ENCODE measurements at regions of chr17 and their contacts with region 1.

Region 1: DNA sequence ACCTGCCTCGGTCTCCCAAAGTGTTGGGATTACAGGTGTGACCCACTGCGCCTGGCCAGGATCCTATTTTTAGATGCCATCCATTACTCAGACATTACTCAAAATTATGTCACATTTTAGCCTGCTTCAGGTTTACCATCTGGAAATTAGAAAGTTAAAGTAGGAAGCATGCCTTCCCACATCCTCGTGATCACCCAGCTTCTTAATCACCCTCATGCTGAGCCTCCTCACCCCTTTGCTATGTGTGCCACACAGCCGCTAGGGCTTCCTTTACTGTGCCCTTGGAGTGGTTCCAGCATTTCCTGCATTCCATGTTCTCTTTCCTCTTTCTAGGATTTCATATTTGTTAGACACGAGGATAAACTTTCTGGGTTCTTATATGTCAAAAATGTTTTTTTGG is 9.3 kb downstream of the ADORA2B start:
- DNase-seq: no peak
- H3K4me3 Mint-ChIP-seq: no peak overlapping the region
- H3K27ac Mint-ChIP-seq: no peak overlapping the region
- H3K4me1 Mint-ChIP-seq: peaks cover 34% of the 10 kb centered on the region
- H3K27me3 Mint-ChIP-seq: peaks cover 64% of the 10 kb centered on the region

Region 2: DNA sequence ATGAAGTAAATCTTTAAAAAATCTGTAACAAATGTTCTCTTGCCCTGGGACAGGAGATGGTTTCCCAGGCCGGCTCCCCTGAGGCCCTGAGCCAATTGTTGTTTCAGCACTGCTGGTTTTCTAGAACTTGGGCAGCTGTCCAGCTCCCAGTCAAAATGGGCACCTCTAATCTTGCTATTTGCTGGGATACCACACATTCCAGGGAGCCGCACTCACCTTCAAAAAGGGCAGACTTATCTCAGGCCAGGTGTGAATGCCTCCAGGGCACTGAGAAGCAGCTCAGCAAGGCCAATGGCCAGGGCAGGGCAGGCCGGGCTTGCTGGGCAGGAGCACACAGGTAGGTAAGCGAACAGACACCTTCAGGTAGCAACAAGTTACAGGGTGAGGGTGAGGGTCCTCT is 294.6 kb before region 1 on chr17:
- intact Hi-C with region 1: no loop called
- DNase-seq: no peak
- H3K4me3 Mint-ChIP-seq: no peak overlapping the region
- H3K27ac Mint-ChIP-seq: no peak overlapping the region
- H3K4me1 Mint-ChIP-seq: peaks cover 16% of the 10 kb centered on the region
- H3K27me3 Mint-ChIP-seq: no peaks in the 10 kb centered on the region

Region 3: GRCh38 chr17:15886804-15887203 is 67.4 kb before region 1 on chr17:
- intact Hi-C with region 1: loop called (anchors 5 kb)
- DNase-seq: no peak
- H3K4me3 Mint-ChIP-seq: no peak overlapping the region
- H3K27ac Mint-ChIP-seq: no peak overlapping the region
- H3K4me1 Mint-ChIP-seq: peaks cover 18% of the 10 kb centered on the region
- H3K27me3 Mint-ChIP-seq: peaks cover 5% of the 10 kb centered on the region

Region 4: DNA sequence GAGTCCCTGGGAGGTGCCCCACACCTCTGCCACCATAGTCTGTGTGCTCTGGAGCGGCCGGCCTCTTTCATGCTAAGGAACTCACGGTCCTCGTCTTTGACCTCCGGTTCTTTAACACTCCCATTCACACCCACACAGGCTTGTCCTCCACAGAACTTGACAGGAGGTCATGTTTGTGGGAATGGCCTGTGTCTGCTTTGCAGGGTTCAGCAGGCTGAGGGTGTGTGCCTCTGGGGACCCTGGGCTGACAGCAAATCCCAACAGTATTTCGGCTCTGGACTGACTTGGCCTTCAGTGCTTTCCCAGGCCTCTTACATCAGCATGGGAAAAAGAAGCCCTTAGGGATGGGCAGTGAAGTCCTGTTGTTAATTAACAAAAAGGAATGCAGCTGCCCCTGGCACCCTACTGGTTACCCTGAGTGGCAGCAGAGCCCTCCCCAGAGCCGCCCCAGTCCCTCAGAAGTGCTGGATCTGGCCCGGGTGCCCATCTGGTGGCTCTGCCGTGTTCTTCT is 44.7 kb before region 1 on chr17:
- intact Hi-C with region 1: no loop called
- DNase-seq: no peak
- H3K4me3 Mint-ChIP-seq: no peak overlapping the region
- H3K27ac Mint-ChIP-seq: no peak overlapping the region
- H3K4me1 Mint-ChIP-seq: no peaks in the 10 kb centered on the region
- H3K27me3 Mint-ChIP-seq: peaks cover 25% of the 10 kb centered on the region

Region 5: GRCh38 chr17:15981208-15981607 is 27.0 kb after region 1 on chr17:
- intact Hi-C with region 1: loop called (anchors 1 kb)
- DNase-seq: no peak
- H3K4me3 Mint-ChIP-seq: no peak overlapping the region
- H3K27ac Mint-ChIP-seq: no peak overlapping the region
- H3K4me1 Mint-ChIP-seq: peaks cover 15% of the 10 kb centered on the region
- H3K27me3 Mint-ChIP-seq: no peaks in the 10 kb centered on the region

Region 6: GRCh38 chr17:15999439-16000350 is 45.5 kb after region 1 on chr17 and contains the starts of genes TTC19 and ZSWIM7:
- intact Hi-C with region 1: loop called (anchors 1 kb)
- DNase-seq: peak; percentile 93
- H3K4me3 Mint-ChIP-seq: peak within 1 kb of the TSS; percentile 96
- H3K27ac Mint-ChIP-seq: peak within 1 kb of the TSS; percentile 99
- H3K4me1 Mint-ChIP-seq: peaks cover 35% of the 10 kb centered on the region
- H3K27me3 Mint-ChIP-seq: peaks cover 1% of the 10 kb centered on the region
- total RNA-seq, gene TTC19: 38.0 and 40.3 TPM in 2 replicates
- total RNA-seq, gene ZSWIM7: 8.3 and 9.5 TPM in 2 replicates

Region 7: GRCh38 chr17:16106161-16106891 is 152.1 kb after region 1 on chr17:
- intact Hi-C with region 1: no loop called
- DNase-seq: no peak
- H3K4me3 Mint-ChIP-seq: no peak overlapping the region
- H3K27ac Mint-ChIP-seq: no peak overlapping the region
- H3K4me1 Mint-ChIP-seq: no peaks in the 10 kb centered on the region
- H3K27me3 Mint-ChIP-seq: no peaks in the 10 kb centered on the region